ENCODE measurements at regions of chr14 and their contacts with region 1.

Region 1: DNA sequence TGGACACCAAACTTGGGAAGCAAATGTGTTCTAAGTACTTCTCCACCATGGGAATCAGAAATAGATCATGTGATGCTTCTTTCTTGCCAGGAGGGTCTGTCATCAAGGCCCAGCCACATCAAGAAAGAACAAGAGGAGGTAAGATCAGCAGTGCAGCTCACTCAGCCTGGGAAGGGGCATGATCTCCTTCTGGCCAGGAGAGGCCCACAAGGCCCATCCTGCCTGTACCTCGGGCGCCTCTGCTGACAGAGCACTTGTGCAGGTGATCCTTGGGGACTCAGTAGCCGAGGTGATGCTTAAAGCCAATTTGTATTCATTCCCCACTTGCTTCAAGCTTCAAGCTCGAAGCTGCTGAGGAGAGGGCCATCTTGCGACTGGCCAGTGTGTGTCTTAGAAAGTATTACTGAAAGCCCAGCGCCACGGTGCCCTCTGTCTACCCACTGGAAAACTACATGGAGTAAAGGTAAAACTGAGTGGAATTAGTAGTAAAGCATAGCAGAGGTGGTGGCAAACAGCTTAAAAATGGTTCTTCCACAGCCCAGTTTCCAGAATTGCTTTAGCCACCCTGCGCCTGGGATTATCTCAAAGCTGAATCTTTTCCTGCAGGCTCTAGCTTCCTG is 26.2 kb downstream of the RTRAF start:
- DNase-seq: peak in 1 of 2 donors; percentile 46
- ATAC-seq: peak in 7 of 8 donors; percentile 18 to 63 (median 51)
- H3K4me3 ChIP-seq: peak overlapping the region in 1 of 10 donors; percentile 12
- H3K27ac ChIP-seq: peak overlapping the region; percentile 65 to 85 (median 74)
- H3K4me1 ChIP-seq: peaks cover 13 to 100% (median 90%) of the 10 kb centered on the region in 9 donors
- H3K27me3 ChIP-seq: no peaks in the 10 kb centered on the region
- CTCF ChIP-seq: peak; percentile 17 to 70 (median 45)

Region 2: GRCh38 chr14:51792819-51793218 is 222.7 kb before region 1 on chr14:
- intact Hi-C with region 1: no loop called
- DNase-seq: no peak
- ATAC-seq: no peak
- H3K4me3 ChIP-seq: no peak overlapping the region
- H3K27ac ChIP-seq: no peak overlapping the region
- H3K4me1 ChIP-seq: peaks cover 0 to 9% (median 0%) of the 10 kb centered on the region in 9 donors
- H3K27me3 ChIP-seq: no peaks in the 10 kb centered on the region
- CTCF ChIP-seq: no peak

Region 3: GRCh38 chr14:51873221-51873893 is 142.2 kb before region 1 on chr14:
- intact Hi-C with region 1: no loop called
- DNase-seq: no peak
- ATAC-seq: peak in 7 of 8 donors; percentile 33 to 71 (median 58)
- H3K4me3 ChIP-seq: no peak overlapping the region
- H3K27ac ChIP-seq: peak overlapping the region in 5 of 10 donors; percentile 1 to 74 (median 19)
- H3K4me1 ChIP-seq: peaks cover 0 to 54% (median 13%) of the 10 kb centered on the region in 9 donors
- H3K27me3 ChIP-seq: no peaks in the 10 kb centered on the region
- CTCF ChIP-seq: no peak

Region 4: DNA sequence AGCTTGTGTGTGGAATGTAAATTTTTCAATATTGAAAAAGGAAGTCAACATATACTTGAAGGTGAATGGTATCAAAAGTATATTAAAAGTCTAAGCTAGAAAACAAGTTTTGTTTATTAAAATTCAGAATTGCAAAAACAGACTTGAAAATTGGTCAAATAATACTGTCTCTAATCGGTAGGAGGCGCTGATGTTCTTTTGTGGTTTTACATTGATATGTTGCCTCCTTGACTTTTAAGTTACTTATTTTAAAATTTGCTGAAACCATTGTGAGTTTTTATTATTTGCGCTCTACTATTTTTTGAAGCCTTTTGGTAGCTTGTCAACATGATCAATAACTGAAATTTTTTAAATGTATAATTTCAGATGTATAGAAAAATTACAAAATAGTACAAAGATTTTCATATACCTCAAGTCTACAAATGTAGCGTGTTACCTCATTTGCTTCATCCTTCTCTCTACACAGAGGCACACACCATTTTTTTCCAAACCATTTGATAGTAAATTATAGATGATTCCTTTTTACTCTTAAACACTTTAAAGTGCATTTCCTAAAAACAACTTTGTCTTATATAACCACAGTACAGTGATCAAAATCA is 19.3 kb before region 1 on chr14:
- intact Hi-C with region 1: loop called in 1 of 10 experiments (anchors 2 kb)
- DNase-seq: peak in 1 of 2 donors; percentile 39
- ATAC-seq: no peak
- H3K4me3 ChIP-seq: no peak overlapping the region
- H3K27ac ChIP-seq: peak overlapping the region in 2 of 10 donors; percentile 5 to 15
- H3K4me1 ChIP-seq: peaks cover 0 to 72% (median 56%) of the 10 kb centered on the region in 9 donors
- H3K27me3 ChIP-seq: no peaks in the 10 kb centered on the region
- CTCF ChIP-seq: peak; percentile 63 to 94 (median 84)

Region 5: GRCh38 chr14:52044791-52045611 is 29.5 kb after region 1 on chr14:
- intact Hi-C with region 1: loop called in 1 of 10 experiments (anchors 5 kb)
- DNase-seq: no peak
- ATAC-seq: peak in 6 of 8 donors; percentile 18 to 70 (median 32)
- H3K4me3 ChIP-seq: no peak overlapping the region
- H3K27ac ChIP-seq: peak overlapping the region in 8 of 10 donors; percentile 49 to 84 (median 68)
- H3K4me1 ChIP-seq: peaks cover 10 to 82% (median 66%) of the 10 kb centered on the region in 9 donors
- H3K27me3 ChIP-seq: no peaks in the 10 kb centered on the region
- CTCF ChIP-seq: no peak